Activated CD4-positive, alpha-beta T cell treated with anti-CD3 and anti-CD28 coated beads, Interleukin-2, amount 10 ng/mL, durations not matched to agents 7 days and 5 days (primary cell): ENCODE measurements at regions of chr6 and their contacts with region 1.

Region 1: GRCh38 chr6:35522660-35523658 is 10.3 kb upstream of the TULP1 start:
- DNase-seq: peak; percentile 80
- H3K4me3 Mint-ChIP-seq: peak overlapping the region; percentile 54
- H3K27ac Mint-ChIP-seq: peak overlapping the region; percentile 86
- H3K4me1 Mint-ChIP-seq: peaks cover 29% of the 10 kb centered on the region
- H3K27me3 Mint-ChIP-seq: peaks cover 2% of the 10 kb centered on the region

Region 2: GRCh38 chr6:35452186-35453090 is 70.5 kb before region 1 on chr6 and contains the start of gene FANCE:
- CTCF ChIA-PET with region 1: no interaction called
- POLR2A ChIA-PET with region 1: no interaction called
- DNase-seq: peak; percentile 91
- H3K4me3 Mint-ChIP-seq: peak within 1 kb of the TSS; percentile 81
- H3K27ac Mint-ChIP-seq: peak within 1 kb of the TSS; percentile 75
- H3K4me1 Mint-ChIP-seq: peaks cover 48% of the 10 kb centered on the region
- H3K27me3 Mint-ChIP-seq: peaks cover 9% of the 10 kb centered on the region
- total RNA-seq, gene FANCE: 11.7 to 13.0 TPM

Region 3: DNA sequence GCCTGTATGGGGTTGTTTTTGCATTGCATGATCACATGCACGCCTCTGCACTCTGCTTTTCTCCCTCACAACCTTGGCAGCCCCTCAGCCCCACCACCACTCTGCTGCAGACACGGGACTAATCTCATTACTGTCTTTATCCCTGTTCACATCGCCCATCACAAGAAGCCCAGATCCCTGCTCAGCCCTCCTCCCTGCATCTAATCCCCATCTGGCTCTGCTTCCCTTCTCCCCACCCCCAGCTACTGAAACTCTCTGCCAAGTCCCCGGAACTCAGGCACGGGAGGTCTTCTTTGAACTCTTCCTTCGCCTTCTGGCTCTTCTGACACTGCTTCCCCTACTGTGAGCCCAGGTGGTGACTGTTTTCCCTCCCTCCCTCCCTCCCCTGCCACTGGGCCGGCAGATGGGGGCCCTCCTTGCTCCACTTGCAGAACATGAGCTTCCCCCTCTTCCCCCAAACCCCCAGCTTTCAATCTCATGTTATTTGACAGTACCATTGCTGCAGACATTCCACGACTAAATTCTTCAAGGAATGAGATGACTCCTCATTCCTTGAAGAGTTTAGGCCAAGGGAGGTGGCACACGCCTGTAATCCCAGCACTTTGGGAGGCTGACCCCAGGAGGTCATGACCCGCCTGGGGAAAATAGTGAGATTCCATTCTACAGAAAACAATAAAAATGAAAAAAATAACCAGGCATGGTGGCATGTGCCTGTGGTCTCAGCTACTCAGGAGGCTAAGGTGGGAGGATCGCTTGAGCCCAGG is 11.6 kb after region 1 on chr6:
- CTCF ChIA-PET with region 1: interaction called, 16 read pairs
- POLR2A ChIA-PET with region 1: no interaction called
- DNase-seq: no peak
- H3K4me3 Mint-ChIP-seq: no peak overlapping the region
- H3K27ac Mint-ChIP-seq: no peak overlapping the region
- H3K4me1 Mint-ChIP-seq: peaks cover 5% of the 10 kb centered on the region
- H3K27me3 Mint-ChIP-seq: peaks cover 7% of the 10 kb centered on the region

Region 4: GRCh38 chr6:35583893-35584688 is 61.1 kb after region 1 on chr6:
- CTCF ChIA-PET with region 1: no interaction called
- POLR2A ChIA-PET with region 1: no interaction called
- DNase-seq: peak; percentile 83
- H3K4me3 Mint-ChIP-seq: no peak overlapping the region
- H3K27ac Mint-ChIP-seq: peak overlapping the region; percentile 67
- H3K4me1 Mint-ChIP-seq: peaks cover 56% of the 10 kb centered on the region
- H3K27me3 Mint-ChIP-seq: no peaks in the 10 kb centered on the region

Region 5: DNA sequence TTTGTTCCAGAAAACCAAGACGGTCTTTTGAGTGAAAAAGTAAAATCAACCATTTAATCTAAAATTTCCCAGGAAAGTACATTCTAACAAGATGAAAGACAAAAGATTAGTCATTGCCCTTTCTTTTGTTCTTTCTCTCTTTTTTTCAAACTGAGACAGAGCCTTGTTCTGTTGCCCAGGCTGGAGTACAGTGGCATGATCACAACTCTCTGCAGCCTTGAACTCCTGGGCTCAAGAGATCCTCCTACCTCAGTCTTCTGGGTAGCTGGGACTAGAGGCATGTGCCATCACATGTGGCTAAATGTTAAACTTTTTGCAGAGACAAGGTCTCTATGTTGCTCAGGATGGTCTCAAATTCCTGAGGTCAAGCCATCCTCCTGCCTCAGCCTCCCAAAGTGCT is 90.8 kb after region 1 on chr6:
- CTCF ChIA-PET with region 1: no interaction called
- POLR2A ChIA-PET with region 1: no interaction called
- DNase-seq: no peak
- H3K4me3 Mint-ChIP-seq: no peak overlapping the region
- H3K27ac Mint-ChIP-seq: no peak overlapping the region
- H3K4me1 Mint-ChIP-seq: peaks cover 36% of the 10 kb centered on the region
- H3K27me3 Mint-ChIP-seq: no peaks in the 10 kb centered on the region